PC-3 (cell line): ENCODE measurements at regions of chr4 and their contacts with region 1.

Region 1: GRCh38 chr4:183571350-183571941 is 66.6 kb downstream of the ING2 start:
- DNase-seq: peak; percentile 15
- ATAC-seq: peak; percentile 22; the same call in 1 of the 2 replicates
- H3K4me3 ChIP-seq: no peak overlapping the region
- H3K27ac ChIP-seq: no peak overlapping the region
- H3K4me1 ChIP-seq: no peaks in the 10 kb centered on the region
- H3K27me3 ChIP-seq: peaks cover 9% of the 10 kb centered on the region; the same call in 1 of the 2 replicates
- CTCF ChIP-seq: no peak

Region 2: GRCh38 chr4:182847576-182848450 is 723.6 kb before region 1 on chr4:
- CTCF ChIA-PET with region 1: interaction called, 10 read pairs
- POLR2A ChIA-PET with region 1: no interaction called
- intact Hi-C with region 1: no loop called
- DNase-seq: no peak
- ATAC-seq: no peak
- H3K4me3 ChIP-seq: no peak overlapping the region
- H3K27ac ChIP-seq: no peak overlapping the region
- H3K4me1 ChIP-seq: no peaks in the 10 kb centered on the region
- H3K27me3 ChIP-seq: no peaks in the 10 kb centered on the region
- CTCF ChIP-seq: no peak

Region 3: DNA sequence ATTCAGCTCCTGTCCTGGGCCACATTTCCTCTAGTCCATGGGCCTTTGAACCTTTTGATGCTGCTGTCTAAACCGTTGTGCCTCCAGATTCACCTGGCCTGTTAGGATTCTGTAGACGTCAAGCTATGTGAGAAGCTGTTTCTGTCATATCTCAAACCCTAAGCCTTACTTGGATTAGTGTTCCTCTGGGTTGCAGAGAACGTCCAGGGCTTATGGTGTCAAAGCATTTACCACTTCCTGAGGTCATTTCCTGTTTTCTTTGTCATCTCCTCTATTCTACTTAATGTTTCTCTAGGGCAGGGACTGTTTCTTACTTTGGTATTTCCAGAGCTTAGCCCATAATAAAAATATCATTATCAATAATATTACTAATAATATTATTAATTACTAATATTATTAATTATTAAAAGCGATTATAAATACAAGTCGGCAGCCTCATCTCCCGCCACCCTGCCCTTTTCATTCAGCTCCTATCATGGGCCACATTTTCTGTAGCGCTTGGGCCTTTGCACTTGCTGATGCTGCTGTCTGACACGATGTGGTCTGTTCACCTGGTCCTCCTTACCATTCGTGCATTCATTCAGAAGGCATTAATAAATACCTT is 1097.2 kb after region 1 on chr4:
- CTCF ChIA-PET with region 1: no interaction called
- POLR2A ChIA-PET with region 1: no interaction called
- intact Hi-C with region 1: no loop called
- DNase-seq: no peak
- ATAC-seq: no peak
- H3K4me3 ChIP-seq: no peak overlapping the region
- H3K27ac ChIP-seq: no peak overlapping the region
- H3K4me1 ChIP-seq: no peaks in the 10 kb centered on the region
- H3K27me3 ChIP-seq: no peaks in the 10 kb centered on the region
- CTCF ChIP-seq: no peak